Activated B cell treated with CpG ODN at 0.5 μM for 24 hours (primary cell): ENCODE measurements at regions of chr20 and their contacts with region 1.

Region 1: DNA sequence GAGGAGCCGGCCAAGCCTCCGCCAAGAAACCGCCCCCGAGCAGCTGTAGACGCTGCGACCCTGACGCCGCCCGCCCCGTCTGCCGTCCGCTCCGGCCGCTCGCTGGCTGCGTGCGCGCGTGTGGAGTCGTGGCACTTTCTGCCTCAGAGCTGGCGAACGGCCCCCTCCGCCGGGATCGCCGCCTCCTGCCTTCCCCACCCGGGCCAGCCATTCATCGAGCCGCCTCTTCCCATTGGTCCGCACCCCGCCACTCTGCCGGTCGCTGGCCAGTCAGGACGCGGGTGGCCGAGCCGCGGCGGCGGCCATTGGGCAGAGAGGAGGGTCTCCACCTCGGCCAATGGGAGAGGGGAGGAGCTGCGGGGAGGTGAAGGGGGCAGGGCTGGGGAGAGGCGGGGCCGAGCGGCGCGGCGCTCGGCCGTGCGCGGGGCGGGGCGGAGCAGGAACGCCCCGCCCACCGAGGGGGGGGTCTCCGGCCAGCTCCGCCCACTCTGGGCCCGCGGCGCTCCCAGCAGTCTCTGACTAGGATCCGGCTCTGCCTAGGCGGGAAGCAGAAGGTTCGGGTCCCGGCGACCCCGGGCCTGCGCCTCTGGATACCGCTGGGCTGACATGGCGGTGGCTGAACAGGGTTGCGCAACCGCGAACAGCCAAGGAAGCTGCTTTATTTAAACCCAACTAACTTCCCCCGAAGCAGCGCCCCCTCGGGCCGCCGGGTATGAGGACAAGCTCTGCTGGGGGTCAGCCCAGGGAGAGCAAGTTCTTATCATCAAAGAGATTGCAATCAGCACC is at the start of gene RRBP1:
- DNase-seq: peak; percentile 92
- ATAC-seq: peak; percentile 94
- H3K4me3 Mint-ChIP-seq: peak within 1 kb of the TSS; percentile 86
- H3K27ac Mint-ChIP-seq: peak within 1 kb of the TSS; percentile 82
- H3K4me1 Mint-ChIP-seq: peaks cover 20% of the 10 kb centered on the region
- H3K27me3 Mint-ChIP-seq: peaks cover 23% of the 10 kb centered on the region
- CTCF ChIP-seq: no peak
- total RNA-seq, gene RRBP1: 18.9 and 22.0 TPM in 2 replicates

Region 2: GRCh38 chr20:17569616-17570346 is 112.5 kb before region 1 on chr20 and contains the start of gene DSTN:
- CTCF ChIA-PET with region 1: interaction called, 5 read pairs
- POLR2A ChIA-PET with region 1: no interaction called
- intact Hi-C with region 1: loop called (anchors 1 kb)
- DNase-seq: peak; percentile 88
- ATAC-seq: peak; percentile 89
- H3K4me3 Mint-ChIP-seq: peak within 1 kb of the TSS; percentile 93
- H3K27ac Mint-ChIP-seq: peak within 1 kb of the TSS; percentile 85
- H3K4me1 Mint-ChIP-seq: peaks cover 16% of the 10 kb centered on the region
- H3K27me3 Mint-ChIP-seq: peaks cover 2% of the 10 kb centered on the region
- CTCF ChIP-seq: no peak
- total RNA-seq, gene DSTN: 14.4 and 20.1 TPM in 2 replicates

Region 3: GRCh38 chr20:17648791-17649730 is 33.2 kb before region 1 on chr20:
- CTCF ChIA-PET with region 1: no interaction called
- POLR2A ChIA-PET with region 1: no interaction called
- intact Hi-C with region 1: no loop called
- DNase-seq: no peak
- ATAC-seq: peak; percentile 75
- H3K4me3 Mint-ChIP-seq: peak overlapping the region; percentile 15
- H3K27ac Mint-ChIP-seq: no peak overlapping the region
- H3K4me1 Mint-ChIP-seq: peaks cover 25% of the 10 kb centered on the region
- H3K27me3 Mint-ChIP-seq: no peaks in the 10 kb centered on the region
- CTCF ChIP-seq: no peak

Region 4: DNA sequence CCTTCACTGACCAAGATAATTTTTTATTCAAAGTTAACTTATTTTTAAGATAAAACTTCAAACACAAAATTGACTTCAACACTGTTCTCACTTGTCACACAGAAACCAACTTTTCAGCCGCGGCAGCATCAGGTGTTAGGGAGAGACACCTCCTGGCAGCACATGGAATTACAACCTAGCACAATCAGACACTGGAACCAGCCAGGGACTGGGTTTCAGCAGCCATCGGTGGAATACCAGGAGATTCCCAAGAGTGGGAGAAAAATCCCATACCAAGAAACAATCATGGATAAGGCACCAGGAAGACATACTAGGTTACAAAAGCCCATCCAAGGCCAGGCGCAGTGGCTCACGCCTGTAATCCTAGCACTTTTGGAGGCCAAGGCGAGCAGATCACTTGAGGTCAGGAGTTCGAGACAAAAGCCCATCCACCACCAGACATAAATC is 216.3 kb after region 1 on chr20:
- CTCF ChIA-PET with region 1: interaction called, 108 read pairs
- POLR2A ChIA-PET with region 1: interaction called, 22 read pairs
- intact Hi-C with region 1: loop called (anchors 1 kb)
- DNase-seq: no peak
- ATAC-seq: peak; percentile 78
- H3K4me3 Mint-ChIP-seq: no peak overlapping the region
- H3K27ac Mint-ChIP-seq: no peak overlapping the region
- H3K4me1 Mint-ChIP-seq: peaks cover 53% of the 10 kb centered on the region
- H3K27me3 Mint-ChIP-seq: peaks cover 16% of the 10 kb centered on the region
- CTCF ChIP-seq: peak; percentile 93

Region 5: DNA sequence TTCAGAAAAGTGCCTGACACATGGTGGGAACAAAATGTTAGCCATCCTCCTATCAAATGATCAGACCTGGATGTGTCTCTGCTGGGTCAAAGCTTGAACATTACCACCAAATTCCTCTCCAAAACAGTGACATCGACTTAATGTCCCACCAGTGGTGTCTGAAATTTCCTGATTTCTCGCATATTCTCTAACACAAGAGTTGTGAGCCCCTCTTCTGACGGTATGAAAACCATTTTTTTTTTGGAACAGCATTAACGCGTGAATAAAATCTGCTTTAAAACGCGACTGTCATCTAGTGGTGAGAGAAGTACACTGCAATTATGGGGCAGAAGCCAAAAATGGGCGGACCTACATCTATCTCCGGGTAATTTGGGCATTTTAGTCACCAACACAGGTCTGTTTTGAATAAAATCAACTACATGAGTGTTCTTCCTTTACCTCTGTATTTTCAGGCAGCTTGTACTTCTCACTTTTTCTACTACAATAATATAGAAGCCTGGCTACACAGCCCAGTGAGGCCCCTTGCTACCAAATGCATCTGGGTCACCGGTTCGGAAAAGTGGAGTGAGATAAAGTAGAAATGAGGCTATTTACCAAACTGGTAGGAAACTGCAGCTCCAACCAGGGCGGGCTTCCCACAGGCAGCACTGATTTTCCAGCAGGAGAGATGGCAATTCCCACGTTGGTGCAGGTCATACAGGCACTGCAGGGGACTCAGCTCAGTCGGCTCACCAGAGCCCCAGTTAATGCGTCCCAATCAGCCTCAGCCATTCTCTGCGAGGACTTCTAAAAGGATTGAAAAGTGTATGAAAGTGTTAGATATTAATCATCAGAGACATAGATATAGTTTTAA is 313.9 kb after region 1 on chr20:
- CTCF ChIA-PET with region 1: interaction called, 30 read pairs
- POLR2A ChIA-PET with region 1: no interaction called
- intact Hi-C with region 1: loop called (anchors 1 kb)
- DNase-seq: no peak
- ATAC-seq: peak; percentile 91
- H3K4me3 Mint-ChIP-seq: no peak overlapping the region
- H3K27ac Mint-ChIP-seq: peak overlapping the region; percentile 20
- H3K4me1 Mint-ChIP-seq: peaks cover 29% of the 10 kb centered on the region
- H3K27me3 Mint-ChIP-seq: no peaks in the 10 kb centered on the region
- CTCF ChIP-seq: peak; percentile 89

Region 6: DNA sequence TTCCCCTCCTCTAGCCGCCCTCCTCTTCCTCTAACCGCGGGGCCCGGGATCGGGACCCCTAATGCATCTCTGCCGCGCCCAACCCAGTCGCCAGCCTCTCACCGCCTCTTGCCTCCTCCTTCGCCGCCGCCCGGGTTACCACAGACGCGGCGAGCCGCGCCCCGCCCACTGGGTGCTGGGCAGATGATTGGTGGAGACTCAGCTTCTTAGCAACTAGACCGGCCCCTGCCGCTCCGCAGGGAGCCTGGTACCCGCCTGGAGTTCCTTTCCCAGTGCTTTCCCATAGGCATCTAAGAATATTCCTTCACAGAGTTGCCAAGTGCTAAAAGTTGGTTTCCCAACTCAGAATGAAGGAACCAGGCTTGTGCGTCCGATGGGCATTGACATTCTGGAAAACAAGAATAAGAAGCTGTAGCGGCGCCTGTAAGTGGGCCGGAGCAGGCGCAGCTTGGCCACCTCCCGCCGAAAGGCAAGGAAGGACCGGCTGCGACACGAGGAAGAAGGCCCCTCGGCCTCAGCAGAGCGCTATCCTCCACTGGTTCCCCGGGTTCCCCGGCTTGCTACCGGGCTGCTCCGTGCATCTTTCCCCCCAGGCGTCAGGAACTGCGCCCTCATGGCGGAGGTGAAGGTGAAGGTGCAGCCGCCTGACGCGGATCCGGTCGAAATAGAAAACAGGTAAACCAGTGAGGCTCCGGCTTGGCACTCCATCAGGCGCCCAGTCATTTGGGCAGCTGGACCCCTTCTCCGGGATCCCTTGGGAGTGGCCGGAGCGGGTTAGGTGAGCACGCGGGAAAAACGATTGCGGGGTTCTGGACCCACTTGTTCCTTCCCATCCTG is 784.8 kb after region 1 on chr20 and contains the starts of genes DZANK1 and POLR3F:
- CTCF ChIA-PET with region 1: no interaction called
- POLR2A ChIA-PET with region 1: no interaction called
- intact Hi-C with region 1: loop called (anchors 1 kb)
- DNase-seq: peak; percentile 88
- ATAC-seq: peak; percentile 96
- H3K4me3 Mint-ChIP-seq: peak within 1 kb of the TSS; percentile 99
- H3K27ac Mint-ChIP-seq: peak within 1 kb of the TSS; percentile 95
- H3K4me1 Mint-ChIP-seq: peaks cover 27% of the 10 kb centered on the region
- H3K27me3 Mint-ChIP-seq: no peaks in the 10 kb centered on the region
- CTCF ChIP-seq: no peak
- total RNA-seq, gene DZANK1: 5.3 and 6.0 TPM in 2 replicates
- total RNA-seq, gene POLR3F: 13.3 and 14.5 TPM in 2 replicates

Region 7: GRCh38 chr20:18587665-18588573 is 905.6 kb after region 1 on chr20 and contains the start of gene DTD1:
- CTCF ChIA-PET with region 1: no interaction called
- POLR2A ChIA-PET with region 1: no interaction called
- intact Hi-C with region 1: loop called (anchors 5 kb)
- DNase-seq: peak; percentile 88
- ATAC-seq: peak; percentile 95
- H3K4me3 Mint-ChIP-seq: peak within 1 kb of the TSS; percentile 93
- H3K27ac Mint-ChIP-seq: peak within 1 kb of the TSS; percentile 90
- H3K4me1 Mint-ChIP-seq: peaks cover 24% of the 10 kb centered on the region
- H3K27me3 Mint-ChIP-seq: peaks cover 9% of the 10 kb centered on the region
- CTCF ChIP-seq: no peak
- total RNA-seq, gene DTD1: 26.3 and 27.5 TPM in 2 replicates